Adrenal gland (tissue), 19 donors: ENCODE measurements at regions of chr5 and their contacts with region 1.

Region 1: DNA sequence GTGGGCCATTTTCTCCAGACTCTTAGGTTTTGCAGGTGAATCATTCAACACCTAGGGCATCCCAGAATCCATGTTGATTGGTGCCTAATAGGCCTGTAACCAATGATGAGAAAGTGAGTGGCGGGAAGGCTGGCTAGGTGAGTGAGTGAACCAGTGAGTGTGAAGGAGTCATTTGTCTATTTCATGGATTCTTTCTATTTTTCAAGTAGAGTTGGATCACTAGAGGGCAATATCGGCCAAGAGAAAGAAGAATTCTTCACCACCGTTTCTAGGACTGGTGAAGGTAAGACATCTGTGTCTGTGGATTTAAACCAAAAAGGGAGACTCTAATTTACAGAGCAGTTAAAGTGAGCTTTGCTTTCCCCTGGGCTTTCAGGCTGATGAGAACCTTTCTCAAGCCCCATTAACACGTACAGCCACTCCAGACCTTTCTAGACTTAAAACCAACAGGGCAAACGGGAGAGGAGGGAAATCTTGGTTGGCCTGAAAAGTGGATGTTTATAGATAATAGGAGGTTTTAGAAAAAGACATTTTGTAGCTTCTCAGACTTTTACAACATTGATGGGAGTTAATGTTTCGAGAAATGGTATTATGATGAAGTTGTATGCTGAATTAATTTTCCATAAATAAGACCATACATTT is 114.3 kb upstream of the IL12B start:
- DNase-seq: no peak
- H3K4me3 ChIP-seq: no peak overlapping the region
- H3K27ac ChIP-seq: no peak overlapping the region
- H3K4me1 ChIP-seq: no peaks in the 10 kb centered on the region
- H3K27me3 ChIP-seq: no peaks in the 10 kb centered on the region
- CTCF ChIP-seq: peak; percentile 32 to 68 (median 56)
- POLR2A ChIP-seq: no peak

Region 2: GRCh38 chr5:159915904-159916840 is 471.6 kb after region 1 on chr5 and contains the start of gene ADRA1B:
- intact Hi-C with region 1: loop called in 1 of 2 experiments (anchors 5 kb)
- DNase-seq: peak; percentile 30 to 68 (median 61)
- H3K4me3 ChIP-seq: peak within 1 kb of the TSS in 1 of 4 donors; percentile 48
- H3K27ac ChIP-seq: peak within 1 kb of the TSS in 3 of 5 donors; percentile 57 to 88 (median 61)
- H3K4me1 ChIP-seq: peaks cover 9 to 22% of the 10 kb centered on the region in 2 donors
- H3K27me3 ChIP-seq: peaks cover 6% of the 10 kb centered on the region
- CTCF ChIP-seq: peak in 4 of 6 experiments; percentile 17 to 80 (median 66)
- POLR2A ChIP-seq: no peak
- total RNA-seq, gene ADRA1B: 1.5 to 12.1 (median 5.0) TPM in 8 of 9 donors, not detected in the other

Region 3: GRCh38 chr5:159987031-159987674 is 542.6 kb after region 1 on chr5:
- intact Hi-C with region 1: loop called (anchors 5 kb)
- DNase-seq: peak; percentile 64 to 89 (median 80)
- H3K4me3 ChIP-seq: peak overlapping the region in 1 of 4 donors; percentile 53
- H3K27ac ChIP-seq: no peak overlapping the region
- H3K4me1 ChIP-seq: peaks cover 0 to 4% of the 10 kb centered on the region in 2 donors
- H3K27me3 ChIP-seq: peaks cover 15% of the 10 kb centered on the region
- CTCF ChIP-seq: peak; percentile 61 to 84 (median 71)
- POLR2A ChIP-seq: no peak